HEK293 (cell line): ENCODE measurements at regions of chr17 and their contacts with region 1.

Region 1: GRCh38 chr17:43483674-43484372 is at the start of gene DHX8:
- H3K4me3 ChIP-seq: peak within 1 kb of the TSS; percentile 77
- H3K27ac ChIP-seq: peak within 1 kb of the TSS; percentile 65
- H3K4me1 ChIP-seq: peaks cover 7% of the 10 kb centered on the region; the same call in 1 of the 2 replicates
- CTCF ChIP-seq: peak; percentile 100

Region 2: DNA sequence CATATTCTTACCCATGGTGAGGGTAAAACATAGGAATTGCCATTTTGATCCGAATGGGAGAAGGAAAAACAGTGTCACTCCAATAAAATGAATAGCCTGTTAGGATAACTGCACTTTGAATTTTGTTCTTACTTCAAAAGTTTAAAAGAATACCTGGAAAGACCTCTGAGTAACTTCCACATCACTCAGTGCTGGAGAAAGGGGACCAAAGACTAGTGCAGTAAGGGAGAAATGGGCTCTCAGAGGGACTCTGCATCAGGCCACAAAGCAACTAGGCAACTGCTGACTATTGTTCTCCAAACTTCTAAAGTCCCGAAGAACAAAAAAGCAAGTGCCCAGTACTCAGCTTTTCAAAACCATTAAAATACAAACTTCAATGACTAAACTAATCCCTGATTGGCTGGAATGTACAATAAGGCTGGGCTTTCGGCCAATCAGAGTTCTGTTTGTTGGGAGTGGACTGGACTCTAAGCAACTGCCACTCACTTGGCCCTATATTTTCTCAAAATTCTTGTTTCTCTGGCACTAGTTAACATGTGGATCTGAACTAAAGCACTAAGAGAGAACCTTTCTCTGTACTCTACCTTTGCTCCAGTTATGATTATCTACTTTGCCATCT is 1472.8 kb before region 1 on chr17:
- CTCF ChIA-PET with region 1: no interaction called
- POLR2A ChIA-PET with region 1: interaction called, 14 read pairs
- H3K4me3 ChIP-seq: no peak overlapping the region
- H3K27ac ChIP-seq: no peak overlapping the region
- H3K4me1 ChIP-seq: peaks cover 5% of the 10 kb centered on the region; the same call in 1 of the 2 replicates
- CTCF ChIP-seq: no peak

Region 3: GRCh38 chr17:43338886-43339516 is 144.8 kb before region 1 on chr17:
- CTCF ChIA-PET with region 1: interaction called, 13 read pairs
- POLR2A ChIA-PET with region 1: no interaction called
- H3K4me3 ChIP-seq: no peak overlapping the region
- H3K27ac ChIP-seq: no peak overlapping the region
- H3K4me1 ChIP-seq: 0 out of 2 replicates have a peak, but pooled peaks cover 3% of the 10 kb centered on the region
- CTCF ChIP-seq: peak; percentile 58

Region 4: DNA sequence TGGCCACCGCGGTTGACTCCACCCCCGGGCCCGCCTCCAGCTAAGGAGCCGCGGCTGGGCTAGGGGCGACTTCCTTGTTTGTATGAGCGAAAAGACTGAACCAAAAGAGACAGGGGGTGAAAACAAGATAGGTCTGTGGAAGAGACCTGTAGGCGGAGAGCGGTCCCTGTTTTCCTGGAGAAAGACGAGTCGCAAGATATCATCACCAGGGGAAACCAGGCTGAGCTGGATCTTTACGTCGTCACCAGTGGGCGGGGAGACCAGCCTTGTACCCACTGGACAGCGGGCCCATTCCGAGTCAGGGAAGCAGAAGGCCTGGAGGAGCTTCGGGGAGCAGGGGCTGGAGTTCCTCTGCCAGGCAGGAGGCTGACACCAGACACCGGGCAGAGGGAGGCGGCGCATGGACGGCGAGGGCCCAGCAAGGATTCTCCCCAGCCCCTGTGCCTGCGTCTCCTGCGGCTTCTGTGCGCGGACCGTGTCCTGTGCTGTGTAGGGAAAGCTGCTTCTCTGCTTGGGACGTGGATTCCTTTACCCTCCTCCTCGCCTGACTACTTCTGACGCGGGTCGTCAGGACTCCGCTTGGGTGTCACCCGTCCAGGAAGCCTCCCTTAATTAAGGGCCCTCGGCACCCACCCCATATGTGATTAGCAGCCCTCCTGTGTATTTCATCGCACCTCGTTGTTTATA is 95.3 kb before region 1 on chr17:
- CTCF ChIA-PET with region 1: interaction called, 406 read pairs
- POLR2A ChIA-PET with region 1: interaction called, 40 read pairs
- H3K4me3 ChIP-seq: peak overlapping the region; percentile 61
- H3K27ac ChIP-seq: peak overlapping the region; percentile 86
- H3K4me1 ChIP-seq: no peaks in the 10 kb centered on the region
- CTCF ChIP-seq: no peak

Region 5: DNA sequence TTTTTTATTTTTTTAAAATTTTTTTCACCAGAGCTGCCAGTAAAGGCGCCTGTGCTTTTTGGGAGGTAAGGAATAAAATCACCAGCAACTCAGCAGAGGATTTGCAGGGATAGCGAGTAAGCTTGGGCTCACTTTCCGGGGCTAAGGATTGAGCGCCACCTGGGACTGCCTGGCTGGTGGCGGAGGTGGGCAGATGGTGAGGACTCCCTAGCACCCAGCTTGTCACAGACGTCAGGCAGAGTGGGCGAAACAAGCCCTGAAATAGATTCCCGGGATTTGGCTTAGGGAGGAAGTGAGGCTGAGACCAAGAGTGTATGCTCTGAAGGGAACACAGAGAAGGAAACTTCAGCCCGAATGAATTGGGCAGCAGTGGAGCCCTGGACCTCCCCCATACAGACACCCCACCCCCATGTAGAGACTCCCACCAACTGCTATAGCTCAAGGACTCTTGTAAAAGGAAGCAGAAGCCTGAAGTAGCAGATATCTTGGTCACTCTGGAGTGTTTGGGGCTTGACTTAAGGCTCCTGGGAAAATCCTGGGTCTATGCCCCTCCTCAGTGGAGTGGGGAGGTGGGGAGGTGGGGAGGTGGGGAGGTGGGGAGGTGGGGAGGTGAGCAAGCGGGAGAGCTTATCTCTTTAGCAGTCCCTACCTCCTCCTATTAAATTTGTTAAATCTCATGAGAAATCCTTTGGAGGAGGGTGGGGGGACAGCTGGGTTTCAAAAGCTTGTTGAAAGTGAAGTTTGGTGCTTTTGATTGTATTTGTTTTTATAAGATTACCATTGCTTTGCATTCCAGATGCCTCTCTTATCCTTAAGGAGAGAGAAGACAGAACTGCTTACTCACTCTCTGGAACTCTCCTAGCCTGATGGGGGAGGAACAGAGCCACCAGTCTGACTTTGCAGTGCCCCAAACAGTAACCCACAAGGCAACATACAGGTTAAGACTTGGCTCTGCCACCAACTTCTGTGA is 76.9 kb before region 1 on chr17:
- CTCF ChIA-PET with region 1: interaction called, 406 read pairs
- POLR2A ChIA-PET with region 1: interaction called, 76 read pairs
- H3K4me3 ChIP-seq: no peak overlapping the region
- H3K27ac ChIP-seq: no peak overlapping the region
- H3K4me1 ChIP-seq: peaks cover 3% of the 10 kb centered on the region; the same call in 1 of the 2 replicates
- CTCF ChIP-seq: no peak

Region 6: DNA sequence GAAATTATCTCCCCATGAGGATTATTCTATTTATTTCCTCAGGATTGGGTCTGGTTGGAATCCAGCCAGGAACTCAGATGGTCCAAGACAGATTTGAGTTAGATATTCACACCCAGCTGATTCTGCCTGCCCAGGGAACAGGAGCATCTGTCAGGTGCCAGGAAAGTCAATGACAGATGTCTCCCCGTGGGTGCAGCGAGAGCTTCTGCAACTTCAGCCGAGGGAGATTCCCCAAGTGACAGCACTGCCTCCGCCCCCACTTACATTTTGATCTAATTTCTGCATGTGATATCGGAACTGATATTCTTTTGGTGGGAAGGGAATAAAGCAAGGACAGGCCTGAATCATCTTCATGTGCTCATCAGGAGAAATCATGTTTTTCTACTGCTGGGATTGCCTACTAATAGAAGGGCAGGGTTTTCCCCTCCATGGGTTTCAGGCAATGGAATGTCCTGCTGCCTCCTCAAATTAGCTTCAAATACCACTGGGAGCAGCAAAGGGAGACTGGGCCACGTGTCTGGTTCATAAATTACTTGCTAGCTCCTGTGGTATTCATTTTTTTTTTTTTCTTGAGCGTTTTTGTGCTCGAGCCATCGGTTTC is 15.7 kb before region 1 on chr17:
- CTCF ChIA-PET with region 1: interaction called, 39 read pairs
- POLR2A ChIA-PET with region 1: interaction called, 3 read pairs
- H3K4me3 ChIP-seq: no peak overlapping the region
- H3K27ac ChIP-seq: no peak overlapping the region
- H3K4me1 ChIP-seq: no peaks in the 10 kb centered on the region
- CTCF ChIP-seq: no peak

Region 7: DNA sequence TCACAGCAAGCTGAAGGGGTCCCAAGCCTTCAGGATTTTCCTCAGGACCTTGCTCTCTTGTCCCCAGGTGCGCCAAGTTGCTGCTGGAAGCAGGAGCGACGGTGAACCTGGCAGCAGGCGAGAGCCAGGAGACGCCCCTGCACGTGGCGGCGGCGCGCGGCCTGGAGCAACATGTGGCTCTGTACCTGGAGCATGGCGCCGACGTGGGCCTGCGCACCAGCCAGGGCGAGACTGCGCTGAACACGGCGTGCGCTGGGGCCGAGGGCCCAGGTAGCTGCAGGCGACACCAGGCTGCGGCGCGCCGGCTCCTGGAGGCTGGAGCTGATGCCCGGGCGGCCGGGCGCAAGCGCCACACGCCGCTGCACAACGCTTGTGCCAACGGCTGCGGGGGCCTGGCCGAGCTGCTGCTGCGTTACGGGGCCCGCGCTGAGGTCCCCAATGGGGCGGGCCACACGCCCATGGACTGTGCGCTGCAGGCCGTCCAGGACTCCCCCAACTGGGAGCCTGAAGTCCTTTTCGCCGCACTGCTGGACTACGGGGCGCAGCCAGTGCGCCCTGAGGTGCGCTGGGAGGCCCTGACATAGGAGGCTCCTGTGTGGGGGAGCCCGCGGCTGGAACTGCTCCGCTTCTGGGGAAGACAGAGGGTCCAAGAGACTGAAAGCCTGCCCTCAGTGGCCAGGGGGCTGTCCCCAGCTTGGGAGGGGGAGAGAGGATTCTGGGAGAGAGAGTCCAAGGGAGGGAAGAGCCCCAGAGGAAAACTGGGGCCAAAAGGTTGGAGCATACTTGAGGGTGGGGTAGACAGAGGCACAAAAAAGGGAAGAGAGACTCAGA is 693.1 kb after region 1 on chr17:
- CTCF ChIA-PET with region 1: no interaction called
- POLR2A ChIA-PET with region 1: no interaction called
- H3K4me3 ChIP-seq: no peak overlapping the region
- H3K27ac ChIP-seq: no peak overlapping the region
- H3K4me1 ChIP-seq: no peaks in the 10 kb centered on the region
- CTCF ChIP-seq: no peak